Activated CD4-positive, alpha-beta memory T cell treated with anti-CD3 and anti-CD28 coated beads for 36 hours (primary cell): ENCODE measurements at regions of chr16 and their contacts with region 1.

Region 1: DNA sequence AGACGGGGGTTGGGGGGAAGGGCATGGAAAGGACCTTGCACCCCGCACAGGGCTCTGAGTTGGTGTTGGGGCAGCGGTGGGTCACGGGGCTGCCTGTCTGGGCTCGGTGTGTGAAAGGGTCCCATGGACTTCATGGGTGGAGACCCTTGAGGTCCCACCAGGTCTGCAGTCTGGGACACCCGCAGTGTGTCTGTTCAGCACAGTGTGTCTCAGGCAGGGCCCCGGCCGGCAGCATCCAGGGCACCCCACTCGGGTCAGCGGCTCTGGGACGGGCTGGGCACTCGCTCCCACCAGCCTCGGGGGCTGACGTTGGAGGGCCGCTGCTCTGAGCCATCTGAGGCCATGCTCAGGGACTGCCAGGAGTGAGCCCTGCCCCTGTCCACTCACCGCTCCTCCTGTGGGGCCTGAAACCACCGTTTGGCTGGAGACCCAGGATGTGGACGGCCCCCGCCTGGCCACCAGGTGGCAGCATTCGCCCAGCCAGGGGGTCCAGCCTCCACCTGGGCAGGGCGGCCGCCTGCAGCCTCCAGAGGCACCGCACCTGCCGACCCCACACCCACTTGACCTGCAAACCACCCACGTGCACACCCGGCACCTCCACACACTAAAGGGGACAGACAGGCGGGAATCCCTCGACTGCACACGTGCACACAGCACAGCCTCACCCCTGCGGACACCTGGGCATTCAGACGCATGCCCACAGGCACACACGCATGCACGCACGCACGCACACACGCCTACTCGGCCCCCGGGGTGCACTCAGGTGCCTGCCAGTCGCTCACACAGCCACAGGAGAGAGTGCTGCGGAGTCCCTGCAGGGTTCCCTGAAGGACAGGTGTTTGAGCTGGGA is 10.1 kb upstream of the ZFPM1 start:
- DNase-seq: peak; percentile 85
- H3K4me3 Mint-ChIP-seq: no peak overlapping the region
- H3K27ac Mint-ChIP-seq: no peak overlapping the region
- H3K4me1 Mint-ChIP-seq: peaks cover 4% of the 10 kb centered on the region
- H3K27me3 Mint-ChIP-seq: no peaks in the 10 kb centered on the region

Region 2: GRCh38 chr16:88376835-88377726 is 65.9 kb before region 1 on chr16:
- CTCF ChIA-PET with region 1: no interaction called
- POLR2A ChIA-PET with region 1: no interaction called
- intact Hi-C with region 1: no loop called
- DNase-seq: no peak
- H3K4me3 Mint-ChIP-seq: no peak overlapping the region
- H3K27ac Mint-ChIP-seq: no peak overlapping the region
- H3K4me1 Mint-ChIP-seq: no peaks in the 10 kb centered on the region
- H3K27me3 Mint-ChIP-seq: peaks cover 4% of the 10 kb centered on the region

Region 3: GRCh38 chr16:88393034-88393433 is 49.9 kb before region 1 on chr16:
- CTCF ChIA-PET with region 1: no interaction called
- POLR2A ChIA-PET with region 1: no interaction called
- intact Hi-C with region 1: no loop called
- DNase-seq: no peak
- H3K4me3 Mint-ChIP-seq: no peak overlapping the region
- H3K27ac Mint-ChIP-seq: no peak overlapping the region
- H3K4me1 Mint-ChIP-seq: no peaks in the 10 kb centered on the region
- H3K27me3 Mint-ChIP-seq: peaks cover 3% of the 10 kb centered on the region

Region 4: DNA sequence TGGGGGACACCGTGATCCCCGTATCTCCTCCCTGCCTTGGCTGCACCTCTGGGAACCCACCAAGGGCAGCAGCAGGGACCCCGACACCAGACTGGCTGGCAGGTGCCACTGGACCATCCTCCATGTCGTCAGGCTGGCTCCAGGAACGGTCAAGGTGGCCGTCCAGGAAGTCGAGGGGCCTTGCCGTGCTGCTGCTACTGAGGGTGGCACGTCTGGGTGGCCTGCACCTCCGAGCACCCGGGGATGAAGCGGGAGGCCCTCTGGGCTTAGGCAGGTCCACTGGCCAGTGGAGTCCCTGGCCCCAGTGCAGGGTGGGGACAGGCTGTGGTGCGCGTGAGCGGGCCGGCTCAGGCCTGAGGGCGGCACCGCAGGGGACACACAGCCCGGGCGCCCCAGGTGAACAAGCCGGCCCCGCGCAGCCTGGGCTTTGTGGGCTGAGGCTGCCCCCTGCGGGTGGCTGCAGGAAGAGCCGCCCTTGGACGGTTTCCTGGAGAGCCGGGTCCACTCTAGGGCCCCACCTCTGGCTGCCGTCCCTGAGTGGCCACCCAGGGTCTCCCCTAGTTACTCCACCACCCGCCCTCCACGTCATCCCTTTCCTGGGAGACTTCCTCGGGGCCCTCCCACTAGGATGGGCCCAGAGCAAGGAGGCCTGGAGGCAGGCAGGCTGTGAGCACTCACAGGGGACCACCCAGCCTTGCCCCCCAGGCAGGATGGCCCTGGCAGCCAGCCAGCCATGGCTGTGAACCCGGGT is 84.4 kb after region 1 on chr16:
- CTCF ChIA-PET with region 1: interaction called, 6 read pairs
- POLR2A ChIA-PET with region 1: no interaction called
- intact Hi-C with region 1: loop called (anchors 1 kb)
- DNase-seq: peak; percentile 71
- H3K4me3 Mint-ChIP-seq: no peak overlapping the region
- H3K27ac Mint-ChIP-seq: no peak overlapping the region
- H3K4me1 Mint-ChIP-seq: peaks cover 2% of the 10 kb centered on the region
- H3K27me3 Mint-ChIP-seq: no peaks in the 10 kb centered on the region

Region 5: GRCh38 chr16:88561485-88562369 is 118.8 kb after region 1 on chr16:
- CTCF ChIA-PET with region 1: interaction called, 34 read pairs
- POLR2A ChIA-PET with region 1: no interaction called
- intact Hi-C with region 1: loop called (anchors 2 kb)
- DNase-seq: peak; percentile 62
- H3K4me3 Mint-ChIP-seq: no peak overlapping the region
- H3K27ac Mint-ChIP-seq: no peak overlapping the region
- H3K4me1 Mint-ChIP-seq: peaks cover 13% of the 10 kb centered on the region
- H3K27me3 Mint-ChIP-seq: peaks cover 5% of the 10 kb centered on the region